ENCODE measurements at regions of chr6 and their contacts with region 1.

Region 1: GRCh38 chr6:2857580-2858337 is 16.1 kb upstream of the SERPINB1 start:
- DNase-seq: peak in 12 of 14 experiments; percentile 31 to 92 (median 58)
- ATAC-seq: peak; percentile 15
- H3K4me3 ChIP-seq: no peak overlapping the region
- H3K4me3 Mint-ChIP-seq: peak overlapping the region; percentile 81
- H3K27ac ChIP-seq: peak overlapping the region; percentile 91 to 94
- H3K27ac Mint-ChIP-seq: peak overlapping the region; percentile 94
- H3K4me1 ChIP-seq: peaks cover 95% of the 10 kb centered on the region
- H3K4me1 Mint-ChIP-seq: peaks cover 91% of the 10 kb centered on the region
- H3K27me3 ChIP-seq: no peaks in the 10 kb centered on the region
- H3K27me3 Mint-ChIP-seq: no peaks in the 10 kb centered on the region
- CTCF ChIP-seq: no peak

Region 2: GRCh38 chr6:2841264-2842138 is 16.3 kb before region 1 on chr6 and contains the start of gene SERPINB1:
- CTCF ChIA-PET with region 1: interaction called, 9 read pairs
- POLR2A ChIA-PET with region 1: interaction called, 36 read pairs
- intact Hi-C with region 1: no loop called
- DNase-seq: peak; percentile 53 to 90 (median 71)
- ATAC-seq: peak; percentile 76
- H3K4me3 ChIP-seq: peak within 1 kb of the TSS; percentile 72
- H3K4me3 Mint-ChIP-seq: peak within 1 kb of the TSS; percentile 87
- H3K27ac ChIP-seq: peak within 1 kb of the TSS; percentile 76
- H3K27ac Mint-ChIP-seq: peak within 1 kb of the TSS; percentile 86
- H3K4me1 ChIP-seq: peaks cover 43% of the 10 kb centered on the region
- H3K4me1 Mint-ChIP-seq: peaks cover 70% of the 10 kb centered on the region
- H3K27me3 ChIP-seq: no peaks in the 10 kb centered on the region
- H3K27me3 Mint-ChIP-seq: no peaks in the 10 kb centered on the region
- CTCF ChIP-seq: no peak
- total RNA-seq, gene SERPINB1: 58.3 to 58.4 TPM

Region 3: GRCh38 chr6:2876210-2877056 is 18.7 kb after region 1 on chr6:
- CTCF ChIA-PET with region 1: interaction called, 6 read pairs
- POLR2A ChIA-PET with region 1: interaction called, 5 read pairs
- intact Hi-C with region 1: loop called in 1 of 2 experiments (anchors 1 kb)
- DNase-seq: peak in 4 of 14 experiments; percentile 23 to 68 (median 62)
- ATAC-seq: no peak
- H3K4me3 ChIP-seq: peak overlapping the region; percentile 44
- H3K4me3 Mint-ChIP-seq: peak overlapping the region; percentile 95
- H3K27ac ChIP-seq: peak overlapping the region; percentile 73 to 79
- H3K27ac Mint-ChIP-seq: peak overlapping the region; percentile 87
- H3K4me1 ChIP-seq: peaks cover 63% of the 10 kb centered on the region
- H3K4me1 Mint-ChIP-seq: peaks cover 80% of the 10 kb centered on the region
- H3K27me3 ChIP-seq: no peaks in the 10 kb centered on the region
- H3K27me3 Mint-ChIP-seq: no peaks in the 10 kb centered on the region
- CTCF ChIP-seq: no peak

Region 4: DNA sequence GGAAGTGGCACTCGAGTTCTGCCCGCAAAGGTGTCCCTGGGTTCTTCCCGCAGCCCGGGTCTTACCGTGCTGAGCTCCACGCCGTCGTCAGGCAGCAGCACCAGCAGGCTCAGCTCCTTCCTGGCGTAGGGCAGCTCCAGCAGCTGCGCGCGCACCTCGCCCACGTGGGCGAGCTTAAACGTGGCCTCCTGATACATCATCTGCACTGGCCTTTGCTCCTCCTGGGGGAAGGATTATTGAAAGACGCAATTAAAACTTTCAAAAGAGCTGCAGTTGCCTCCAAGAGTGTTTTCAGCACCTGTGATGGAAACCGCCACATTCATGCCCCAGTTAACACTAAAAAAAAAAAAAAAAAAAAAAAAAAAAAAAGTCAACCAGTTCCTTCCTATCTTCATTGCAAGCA is 34.0 kb after region 1 on chr6:
- CTCF ChIA-PET with region 1: interaction called, 8 read pairs
- POLR2A ChIA-PET with region 1: interaction called, 18 read pairs
- intact Hi-C with region 1: loop called in 1 of 2 experiments (anchors 5 kb)
- DNase-seq: peak; percentile 44 to 94 (median 72)
- ATAC-seq: peak; percentile 97
- H3K4me3 ChIP-seq: peak overlapping the region; percentile 9
- H3K4me3 Mint-ChIP-seq: peak overlapping the region; percentile 81
- H3K27ac ChIP-seq: peak overlapping the region; percentile 29 to 51
- H3K27ac Mint-ChIP-seq: peak overlapping the region; percentile 96
- H3K4me1 ChIP-seq: peaks cover 21% of the 10 kb centered on the region
- H3K4me1 Mint-ChIP-seq: peaks cover 80% of the 10 kb centered on the region
- H3K27me3 ChIP-seq: no peaks in the 10 kb centered on the region
- H3K27me3 Mint-ChIP-seq: no peaks in the 10 kb centered on the region
- CTCF ChIP-seq: no peak

Region 5: GRCh38 chr6:2911171-2911570 is 53.4 kb after region 1 on chr6:
- CTCF ChIA-PET with region 1: interaction called, 4 read pairs
- POLR2A ChIA-PET with region 1: interaction called, 12 read pairs
- intact Hi-C with region 1: no loop called
- DNase-seq: no peak
- ATAC-seq: no peak
- H3K4me3 ChIP-seq: no peak overlapping the region
- H3K4me3 Mint-ChIP-seq: no peak overlapping the region
- H3K27ac ChIP-seq: no peak overlapping the region
- H3K27ac Mint-ChIP-seq: no peak overlapping the region
- H3K4me1 ChIP-seq: peaks cover 15% of the 10 kb centered on the region
- H3K4me1 Mint-ChIP-seq: peaks cover 25% of the 10 kb centered on the region
- H3K27me3 ChIP-seq: no peaks in the 10 kb centered on the region
- H3K27me3 Mint-ChIP-seq: no peaks in the 10 kb centered on the region
- CTCF ChIP-seq: no peak